Right ventricle myocardium superior (tissue), 1 donor: ENCODE measurements at regions of chr5 and their contacts with region 1.

Region 1: GRCh38 chr5:175534070-175534932 is 55.9 kb downstream of the SFXN1 start:
- DNase-seq: peak; percentile 89
- ATAC-seq: peak; percentile 97

Region 2: GRCh38 chr5:175657593-175658271 is 123.4 kb after region 1 on chr5 and contains the start of gene HRH2:
- intact Hi-C with region 1: loop called (anchors 10 kb)
- DNase-seq: peak; percentile 79
- ATAC-seq: peak; percentile 79
- total RNA-seq, gene HRH2: 41.2 TPM

Region 3: GRCh38 chr5:175718401-175719108 is 184.3 kb after region 1 on chr5:
- intact Hi-C with region 1: loop called (anchors 2 kb)
- DNase-seq: peak; percentile 82
- ATAC-seq: peak; percentile 78